Activated T-helper 1 cell treated with anti-CD3 and anti-CD28 coated beads, Interleukin-12 subunit alpha, Interleukin-12 subunit beta, Interleukin-2, Interleukin-4 antibody, amounts not matched to agents 30 ng/mL and 10 ng/mL and 1 ng/mL, durations not matched to agents 14 hours and 24 hours and 36 hours (primary cell): ENCODE measurements at regions of chr10 and their contacts with region 1.

Region 1: DNA sequence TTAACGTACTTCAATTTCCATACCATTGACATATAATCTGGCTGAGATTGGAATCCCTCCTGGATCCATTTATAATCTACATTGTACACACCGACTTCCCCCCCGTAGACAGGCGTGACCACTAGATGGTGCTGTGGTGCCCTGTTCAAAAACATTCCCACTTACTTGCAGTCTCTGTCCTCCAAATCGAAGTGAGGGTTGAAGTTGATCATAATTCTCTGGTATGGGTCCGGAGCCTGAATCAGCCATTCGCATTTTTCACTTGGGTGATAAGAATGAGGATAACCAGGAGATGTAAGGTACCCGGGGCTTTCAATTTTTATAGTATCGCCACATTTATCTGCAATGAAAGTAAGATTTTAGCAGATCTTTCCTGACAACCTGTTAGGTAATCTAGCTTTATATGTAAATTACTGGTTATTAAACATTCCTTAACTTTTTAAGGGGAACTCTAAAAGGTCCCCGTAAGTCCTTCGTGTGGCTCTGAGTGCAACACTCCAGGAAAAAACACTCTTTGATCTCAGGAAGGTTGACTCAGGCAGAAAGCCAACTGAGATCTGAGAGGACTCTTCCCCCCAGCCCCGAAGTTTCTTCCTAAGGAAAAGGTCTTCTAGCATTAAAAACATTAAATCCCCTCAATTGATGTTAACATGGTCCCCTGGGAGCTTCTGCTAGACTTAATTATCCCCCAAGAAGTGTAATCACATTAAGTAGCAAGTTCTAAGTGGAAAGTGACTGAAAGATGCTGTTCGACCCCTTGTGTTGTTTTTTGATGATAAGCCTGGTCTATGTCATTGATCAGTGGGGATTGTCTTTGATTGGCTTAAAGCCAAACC is 3.7 kb downstream of the NRP1 start:
- DNase-seq: peak; percentile 53
- H3K4me3 Mint-ChIP-seq: no peak overlapping the region
- H3K27ac Mint-ChIP-seq: no peak overlapping the region
- H3K4me1 Mint-ChIP-seq: peaks cover 22% of the 10 kb centered on the region
- H3K27me3 Mint-ChIP-seq: peaks cover 55% of the 10 kb centered on the region

Region 2: DNA sequence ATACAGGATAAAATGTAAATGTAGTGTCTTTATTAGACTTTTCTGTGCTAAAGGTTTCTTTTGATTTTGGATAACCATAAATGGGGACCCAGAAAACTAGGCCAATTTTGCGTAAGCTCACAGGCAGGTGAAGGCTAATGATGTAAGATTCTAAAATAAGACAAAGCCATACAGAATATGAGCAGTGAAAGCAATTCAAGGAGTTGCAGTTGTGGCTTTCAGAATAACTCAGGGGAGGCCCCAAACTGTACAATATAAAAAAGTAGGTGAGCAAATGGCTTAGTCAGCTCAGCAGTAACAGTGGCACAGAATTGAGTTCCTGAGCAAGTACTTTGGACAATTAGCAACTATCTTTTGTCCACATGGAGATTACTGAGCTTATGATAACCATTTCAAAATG is 85.4 kb after region 1 on chr10:
- intact Hi-C with region 1: loop called (anchors 5 kb)
- DNase-seq: no peak
- H3K4me3 Mint-ChIP-seq: no peak overlapping the region
- H3K27ac Mint-ChIP-seq: no peak overlapping the region
- H3K4me1 Mint-ChIP-seq: no peaks in the 10 kb centered on the region
- H3K27me3 Mint-ChIP-seq: peaks cover 5% of the 10 kb centered on the region

Region 3: GRCh38 chr10:33509231-33509831 is 178.6 kb after region 1 on chr10:
- intact Hi-C with region 1: loop called (anchors 10 kb)
- DNase-seq: no peak
- H3K4me3 Mint-ChIP-seq: no peak overlapping the region
- H3K27ac Mint-ChIP-seq: no peak overlapping the region
- H3K4me1 Mint-ChIP-seq: no peaks in the 10 kb centered on the region
- H3K27me3 Mint-ChIP-seq: no peaks in the 10 kb centered on the region